Mucosa of descending colon (tissue), 3 donors: ENCODE measurements at regions of chr6 and their contacts with region 1.

Region 1: DNA sequence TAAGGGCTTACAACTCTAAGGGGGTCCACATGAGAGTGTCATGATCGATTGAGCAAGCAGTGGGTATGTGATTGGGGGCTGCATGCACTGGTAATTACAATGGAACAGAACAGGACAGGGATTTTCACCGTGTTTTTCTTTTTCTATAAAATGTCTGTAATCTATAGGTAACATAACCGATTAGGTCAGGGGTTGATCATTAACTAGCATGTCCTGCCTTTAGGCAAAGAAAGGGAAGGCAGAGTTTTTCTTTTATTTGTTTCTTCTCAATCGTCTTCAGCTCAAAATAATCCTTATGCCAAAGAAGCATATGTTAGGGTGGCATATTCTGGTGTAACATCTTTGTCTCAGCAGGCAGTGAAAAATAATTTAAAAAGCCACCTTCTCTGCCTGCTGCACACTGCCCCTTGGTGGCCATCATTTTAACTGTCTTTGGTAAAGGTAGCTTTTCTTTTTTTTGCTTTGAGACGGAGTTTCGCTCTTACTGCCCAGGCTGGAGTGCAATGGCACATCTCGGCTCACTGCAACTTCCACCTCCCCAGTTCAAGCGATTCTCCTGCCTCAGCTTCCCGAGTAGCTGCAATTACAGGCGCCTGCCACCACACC is 9.7 kb upstream of the CEP43 start:
- DNase-seq: peak in 1 of 3 donors; percentile 25
- ATAC-seq: peak; percentile 94
- H3K4me3 ChIP-seq: no peak overlapping the region
- H3K4me1 ChIP-seq: no peaks in the 10 kb centered on the region
- CTCF ChIP-seq: no peak

Region 2: GRCh38 chr6:166775180-166776081 is 214.1 kb before region 1 on chr6:
- intact Hi-C with region 1: loop called in 1 of 2 experiments (anchors 10 kb)
- DNase-seq: peak in 2 of 3 donors; percentile 34 to 56
- ATAC-seq: peak; percentile 79
- H3K4me3 ChIP-seq: no peak overlapping the region
- H3K4me1 ChIP-seq: no peaks in the 10 kb centered on the region
- CTCF ChIP-seq: peak; percentile 73

Region 3: GRCh38 chr6:166786704-166787293 is 202.7 kb before region 1 on chr6:
- intact Hi-C with region 1: loop called in 1 of 2 experiments (anchors 5 kb)
- DNase-seq: peak in 1 of 3 donors; percentile 58
- ATAC-seq: peak; percentile 72
- H3K4me3 ChIP-seq: no peak overlapping the region
- H3K4me1 ChIP-seq: no peaks in the 10 kb centered on the region
- CTCF ChIP-seq: peak; percentile 34